Cardiac septum (tissue), 1 donor: ENCODE measurements at regions of chr1 and their contacts with region 1.

Region 1: DNA sequence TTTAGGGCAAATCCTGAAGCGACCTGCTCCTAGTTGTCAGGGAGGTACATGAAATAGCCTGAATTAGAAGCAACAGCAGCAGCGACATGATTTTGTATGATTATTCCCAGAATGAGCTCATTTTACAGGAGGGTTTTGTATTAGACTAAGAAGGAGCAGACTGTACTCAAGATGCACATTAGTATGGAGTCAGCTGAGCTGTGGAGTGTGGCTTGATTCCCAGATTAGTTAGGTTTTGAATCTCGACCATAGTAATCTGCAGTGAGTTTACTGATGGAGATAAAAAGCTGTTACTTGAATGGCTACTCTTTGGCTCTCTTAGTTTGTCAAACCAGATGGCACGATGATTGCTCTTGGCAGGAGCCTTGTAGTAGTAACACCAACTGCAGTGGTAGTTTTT is 143.1 kb downstream of the PHTF1 start:
- DNase-seq: no peak

Region 2: DNA sequence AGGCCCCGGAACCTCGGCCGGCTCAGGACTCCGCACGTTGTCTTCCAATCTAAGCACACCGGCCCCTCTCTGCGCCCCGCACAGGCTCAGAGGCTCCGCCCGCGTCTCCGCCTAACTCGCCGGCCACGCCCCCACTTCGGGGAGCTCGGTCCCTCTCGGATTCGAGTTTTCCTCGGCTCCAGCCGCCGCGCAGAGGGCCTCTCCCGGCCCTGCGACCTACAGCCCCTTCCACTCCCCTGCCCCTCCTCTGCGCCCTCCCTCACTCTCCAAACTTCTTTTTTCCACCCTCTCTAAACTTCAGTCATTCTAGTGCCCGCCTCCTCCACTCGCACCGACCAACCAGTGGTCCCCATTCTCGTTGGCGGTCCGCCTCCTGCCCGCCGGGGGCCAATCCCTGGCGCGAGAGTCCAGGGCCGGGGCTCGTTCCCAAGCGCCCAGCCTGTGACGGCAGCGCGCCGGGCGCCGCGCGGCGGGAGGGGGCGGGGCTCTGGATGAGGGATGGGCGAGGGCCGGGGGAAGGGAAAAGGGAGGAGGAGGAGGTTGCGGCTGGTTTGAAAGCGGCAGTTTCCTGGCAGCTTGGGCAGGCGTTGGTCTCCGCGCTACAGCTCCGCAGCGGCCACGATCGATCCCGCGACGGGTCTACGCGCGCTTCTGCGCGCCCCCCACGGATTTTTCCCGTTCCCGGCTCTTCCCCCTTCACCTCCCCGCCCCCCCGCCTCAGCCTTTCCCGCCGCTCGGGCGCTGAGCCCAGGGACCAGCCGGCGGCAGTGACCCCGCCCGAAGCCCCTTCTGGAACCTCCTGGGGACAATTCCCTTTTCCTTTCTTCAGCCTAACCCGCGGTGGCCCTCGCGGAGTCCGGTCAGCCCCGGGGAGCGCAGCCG is 226.0 kb before region 1 on chr1 and contains the start of gene MAGI3:
- intact Hi-C with region 1: loop called (anchors 10 kb)
- DNase-seq: peak; percentile 97
- total RNA-seq, gene MAGI3: 8.6 TPM